Activated CD4-positive, alpha-beta memory T cell treated with anti-CD3 and anti-CD28 coated beads, Interleukin-2, amount 10 ng/mL, durations not matched to agents 7 days and 5 days (primary cell): ENCODE measurements at regions of chr1 and their contacts with region 1.

Region 1: GRCh38 chr1:92485381-92486257 is 1.1 kb downstream of the GFI1 start:
- DNase-seq: peak; percentile 90
- H3K4me3 Mint-ChIP-seq: peak overlapping the region; percentile 85
- H3K27ac Mint-ChIP-seq: peak overlapping the region; percentile 92
- H3K4me1 Mint-ChIP-seq: peaks cover 45% of the 10 kb centered on the region
- H3K27me3 Mint-ChIP-seq: no peaks in the 10 kb centered on the region

Region 2: GRCh38 chr1:92043621-92044020 is 442.0 kb before region 1 on chr1:
- CTCF ChIA-PET with region 1: no interaction called
- POLR2A ChIA-PET with region 1: no interaction called
- DNase-seq: no peak
- H3K4me3 Mint-ChIP-seq: no peak overlapping the region
- H3K27ac Mint-ChIP-seq: no peak overlapping the region
- H3K4me1 Mint-ChIP-seq: no peaks in the 10 kb centered on the region
- H3K27me3 Mint-ChIP-seq: no peaks in the 10 kb centered on the region

Region 3: GRCh38 chr1:92310185-92310597 is 175.4 kb before region 1 on chr1:
- CTCF ChIA-PET with region 1: interaction called, 89 read pairs
- POLR2A ChIA-PET with region 1: interaction called, 306 read pairs
- DNase-seq: no peak
- H3K4me3 Mint-ChIP-seq: no peak overlapping the region
- H3K27ac Mint-ChIP-seq: no peak overlapping the region
- H3K4me1 Mint-ChIP-seq: peaks cover 38% of the 10 kb centered on the region
- H3K27me3 Mint-ChIP-seq: no peaks in the 10 kb centered on the region

Region 4: DNA sequence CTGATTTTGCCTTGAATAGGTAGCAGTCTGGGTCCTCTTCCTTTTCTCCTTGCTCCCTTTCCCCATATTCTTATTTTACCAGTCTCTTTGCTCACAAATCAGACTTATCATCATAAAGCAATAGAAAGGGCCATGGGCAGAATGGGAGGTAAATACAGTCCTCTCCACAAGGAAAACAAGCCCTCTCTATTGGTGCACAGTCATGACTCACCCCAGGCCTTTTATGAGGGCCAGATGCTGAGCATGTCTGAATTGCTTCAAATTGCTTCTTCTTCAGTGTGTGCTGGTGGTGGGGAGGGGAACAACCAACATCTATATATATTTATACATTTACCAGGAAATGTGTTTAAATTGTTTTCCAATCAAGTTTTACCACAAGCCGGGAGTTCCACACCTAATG is 74.1 kb before region 1 on chr1:
- CTCF ChIA-PET with region 1: interaction called, 3 read pairs
- POLR2A ChIA-PET with region 1: interaction called, 11 read pairs
- DNase-seq: no peak
- H3K4me3 Mint-ChIP-seq: no peak overlapping the region
- H3K27ac Mint-ChIP-seq: no peak overlapping the region
- H3K4me1 Mint-ChIP-seq: peaks cover 40% of the 10 kb centered on the region
- H3K27me3 Mint-ChIP-seq: no peaks in the 10 kb centered on the region

Region 5: GRCh38 chr1:92536980-92537884 is 51.6 kb after region 1 on chr1:
- CTCF ChIA-PET with region 1: interaction called, 72 read pairs
- POLR2A ChIA-PET with region 1: interaction called, 372 read pairs
- DNase-seq: no peak
- H3K4me3 Mint-ChIP-seq: peak overlapping the region; percentile 59
- H3K27ac Mint-ChIP-seq: peak overlapping the region; percentile 88
- H3K4me1 Mint-ChIP-seq: peaks cover 79% of the 10 kb centered on the region
- H3K27me3 Mint-ChIP-seq: no peaks in the 10 kb centered on the region

Region 6: DNA sequence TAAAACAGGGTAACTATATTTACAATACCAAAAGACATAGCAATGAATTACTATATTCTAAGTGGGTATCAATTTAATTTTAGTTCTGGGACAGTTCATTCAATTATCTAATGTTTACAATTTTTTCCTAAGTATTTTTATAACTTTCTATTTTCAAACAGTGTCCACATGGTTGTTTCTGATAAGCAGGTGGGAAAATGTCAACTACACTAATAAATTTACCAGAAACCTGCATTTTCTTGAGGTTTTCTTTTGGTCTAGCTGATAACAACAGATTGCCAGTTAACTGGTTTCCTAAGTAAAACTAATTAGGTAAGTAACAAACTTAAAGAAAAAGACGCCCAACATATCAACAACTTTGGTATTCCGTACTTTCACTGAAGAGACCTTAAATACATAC is 86.0 kb after region 1 on chr1:
- CTCF ChIA-PET with region 1: interaction called, 11 read pairs
- POLR2A ChIA-PET with region 1: interaction called, 140 read pairs
- DNase-seq: no peak
- H3K4me3 Mint-ChIP-seq: no peak overlapping the region
- H3K27ac Mint-ChIP-seq: no peak overlapping the region
- H3K4me1 Mint-ChIP-seq: peaks cover 64% of the 10 kb centered on the region
- H3K27me3 Mint-ChIP-seq: no peaks in the 10 kb centered on the region

Region 7: GRCh38 chr1:92599184-92599583 is 113.6 kb after region 1 on chr1:
- CTCF ChIA-PET with region 1: interaction called, 11 read pairs
- POLR2A ChIA-PET with region 1: interaction called, 39 read pairs
- DNase-seq: no peak
- H3K4me3 Mint-ChIP-seq: no peak overlapping the region
- H3K27ac Mint-ChIP-seq: no peak overlapping the region
- H3K4me1 Mint-ChIP-seq: peaks cover 24% of the 10 kb centered on the region
- H3K27me3 Mint-ChIP-seq: no peaks in the 10 kb centered on the region